CD8-positive, alpha-beta T cell (primary cell): ENCODE measurements at regions of chr5 and their contacts with region 1.

Region 1: GRCh38 chr5:116546033-116546728 is 28.4 kb downstream of the SEMA6A start:
- DNase-seq: no peak
- ATAC-seq: no peak
- H3K4me3 ChIP-seq: no peak overlapping the region
- H3K4me3 Mint-ChIP-seq: no peak overlapping the region
- H3K27ac ChIP-seq: no peak overlapping the region
- H3K27ac Mint-ChIP-seq: no peak overlapping the region
- H3K4me1 ChIP-seq: no peaks in the 10 kb centered on the region
- H3K4me1 Mint-ChIP-seq: no peaks in the 10 kb centered on the region
- H3K27me3 ChIP-seq: no peaks in the 10 kb centered on the region
- H3K27me3 Mint-ChIP-seq: peaks cover 6% of the 10 kb centered on the region
- CTCF ChIP-seq: no peak

Region 2: GRCh38 chr5:116265471-116265870 is 280.7 kb before region 1 on chr5:
- CTCF ChIA-PET with region 1: no interaction called
- POLR2A ChIA-PET with region 1: no interaction called
- intact Hi-C with region 1: loop called in 1 of 2 experiments (anchors 5 kb)
- DNase-seq: no peak
- ATAC-seq: no peak
- H3K4me3 ChIP-seq: no peak overlapping the region
- H3K4me3 Mint-ChIP-seq: no peak overlapping the region
- H3K27ac ChIP-seq: no peak overlapping the region
- H3K27ac Mint-ChIP-seq: no peak overlapping the region
- H3K4me1 ChIP-seq: no peaks in the 10 kb centered on the region
- H3K4me1 Mint-ChIP-seq: no peaks in the 10 kb centered on the region
- H3K27me3 ChIP-seq: no peaks in the 10 kb centered on the region
- H3K27me3 Mint-ChIP-seq: no peaks in the 10 kb centered on the region
- CTCF ChIP-seq: no peak

Region 3: GRCh38 chr5:116600876-116601275 is 54.7 kb after region 1 on chr5:
- CTCF ChIA-PET with region 1: no interaction called
- POLR2A ChIA-PET with region 1: no interaction called
- intact Hi-C with region 1: no loop called
- DNase-seq: no peak
- ATAC-seq: no peak
- H3K4me3 ChIP-seq: no peak overlapping the region
- H3K4me3 Mint-ChIP-seq: no peak overlapping the region
- H3K27ac ChIP-seq: no peak overlapping the region
- H3K27ac Mint-ChIP-seq: no peak overlapping the region
- H3K4me1 ChIP-seq: no peaks in the 10 kb centered on the region
- H3K4me1 Mint-ChIP-seq: no peaks in the 10 kb centered on the region
- H3K27me3 ChIP-seq: no peaks in the 10 kb centered on the region
- H3K27me3 Mint-ChIP-seq: peaks cover 4% of the 10 kb centered on the region
- CTCF ChIP-seq: no peak